ENCODE measurements at regions of chr7 and their contacts with region 1.

Region 1: GRCh38 chr7:149422129-149422913 is 38.5 kb downstream of the ZNF777 start:
- DNase-seq: peak; percentile 90 to 98 (median 98)
- ATAC-seq: peak; percentile 98
- H3K4me3 ChIP-seq: peak overlapping the region; percentile 50
- H3K27ac ChIP-seq: peak overlapping the region; percentile 47; the same call in 1 of the 3 replicates
- H3K4me1 ChIP-seq: peaks cover 3 to 26% of the 10 kb centered on the region in 2 experiments; a peak in 3 of 5 replicates
- H3K27me3 ChIP-seq: no peaks in the 10 kb centered on the region
- CTCF ChIP-seq: peak; percentile 65 to 99 (median 98)
- EP300 ChIP-seq: no peak; the same call in none of the 2 replicates
- POLR2A ChIP-seq: peak; percentile 85
- RAD21 ChIP-seq: peak; percentile 57 to 97; a peak in 3 of 4 replicates

Region 2: GRCh38 chr7:149097088-149097487 is 325.2 kb before region 1 on chr7:
- CTCF ChIA-PET with region 1: no interaction called
- POLR2A ChIA-PET with region 1: no interaction called
- in situ Hi-C with region 1: no loop called
- intact Hi-C with region 1: no loop called
- DNase-seq: no peak
- ATAC-seq: peak; percentile 9; the same call in 1 of the 3 replicates
- H3K4me3 ChIP-seq: no peak overlapping the region
- H3K27ac ChIP-seq: no peak overlapping the region
- H3K4me1 ChIP-seq: peaks cover 4 to 7% of the 10 kb centered on the region in 2 experiments; a peak in 4 of 5 replicates
- H3K27me3 ChIP-seq: peaks cover 11% of the 10 kb centered on the region in 2 experiments; a peak in 3 of 5 replicates
- CTCF ChIP-seq: no peak
- EP300 ChIP-seq: no peak
- POLR2A ChIP-seq: no peak
- RAD21 ChIP-seq: no peak

Region 3: GRCh38 chr7:149195180-149196150 is 226.9 kb before region 1 on chr7 and contains the start of gene ZNF282:
- CTCF ChIA-PET with region 1: no interaction called
- POLR2A ChIA-PET with region 1: no interaction called
- in situ Hi-C with region 1: no loop called
- intact Hi-C with region 1: loop called (anchors 5 kb)
- DNase-seq: peak; percentile 95 to 98 (median 98)
- ATAC-seq: peak; percentile 97
- H3K4me3 ChIP-seq: peak within 1 kb of the TSS; percentile 99
- H3K27ac ChIP-seq: peak within 1 kb of the TSS; percentile 88
- H3K4me1 ChIP-seq: peaks cover 14 to 31% of the 10 kb centered on the region in 2 experiments; a peak in 4 of 5 replicates
- H3K27me3 ChIP-seq: no peaks in the 10 kb centered on the region
- CTCF ChIP-seq: peak; percentile 89 to 95 (median 93)
- EP300 ChIP-seq: peak; percentile 17; the same call in 1 of the 2 replicates
- POLR2A ChIP-seq: peak; percentile 92
- RAD21 ChIP-seq: peak; percentile 69 to 71
- polyA plus RNA-seq, gene ZNF282: 0.76 to 1.3 TPM

Region 4: DNA sequence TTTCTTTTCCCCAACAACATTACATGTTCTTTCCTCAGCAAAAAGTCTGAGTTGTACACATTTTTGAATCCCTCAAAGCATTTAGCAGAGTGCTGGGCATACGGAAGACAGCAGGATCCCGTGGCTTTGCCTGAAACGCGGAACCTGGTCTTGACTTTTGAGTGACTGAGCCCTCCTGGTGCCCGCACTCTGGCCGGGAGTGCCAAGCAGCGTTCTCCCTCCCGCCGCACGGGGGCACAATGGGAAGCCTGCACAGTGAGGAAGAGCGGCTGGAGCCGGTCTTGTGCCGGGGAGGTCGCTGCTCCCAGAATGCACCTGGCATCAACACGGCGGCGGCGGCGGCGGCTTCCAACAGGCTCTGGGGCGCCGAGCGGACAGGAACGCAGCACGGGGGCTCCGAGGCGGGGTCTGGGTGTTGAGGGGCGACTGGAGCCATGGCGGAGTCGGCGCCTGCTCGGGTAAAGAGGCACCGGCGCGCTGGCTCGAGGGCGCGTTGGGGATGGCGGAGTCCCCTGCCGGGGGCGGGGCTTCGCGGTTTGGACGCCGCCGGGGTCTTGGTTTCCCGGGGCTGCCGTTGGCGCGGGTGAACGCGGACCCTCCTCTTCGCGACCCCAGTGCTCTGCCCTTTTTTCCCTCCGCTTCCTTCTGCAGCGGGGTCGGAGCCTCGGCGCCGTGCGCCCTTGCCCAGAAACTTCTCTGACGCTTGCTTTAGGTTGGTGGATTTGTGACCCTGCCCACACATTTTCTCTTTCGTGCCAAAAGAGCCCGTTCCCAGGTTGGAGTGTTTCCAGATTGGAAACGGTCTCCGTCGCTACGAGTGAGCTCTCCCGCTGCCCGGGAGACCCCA is 182.8 kb before region 1 on chr7 and contains the start of gene ZNF212:
- CTCF ChIA-PET with region 1: interaction called, 4 read pairs
- POLR2A ChIA-PET with region 1: no interaction called
- in situ Hi-C with region 1: no loop called
- intact Hi-C with region 1: loop called (anchors 1 kb)
- DNase-seq: peak; percentile 97 to 99 (median 99)
- ATAC-seq: peak; percentile 100
- H3K4me3 ChIP-seq: peak within 1 kb of the TSS; percentile 74
- H3K27ac ChIP-seq: peak within 1 kb of the TSS; percentile 70
- H3K4me1 ChIP-seq: peaks cover 7 to 12% of the 10 kb centered on the region in 2 experiments
- H3K27me3 ChIP-seq: no peaks in the 10 kb centered on the region
- CTCF ChIP-seq: peak; percentile 95 to 97 (median 97)
- EP300 ChIP-seq: peak; percentile 36; the same call in 1 of the 2 replicates
- POLR2A ChIP-seq: peak; percentile 89
- RAD21 ChIP-seq: peak; percentile 45 to 50; a peak in 2 of 4 replicates
- polyA plus RNA-seq, gene ZNF212: 1.8 to 1.9 TPM

Region 5: DNA sequence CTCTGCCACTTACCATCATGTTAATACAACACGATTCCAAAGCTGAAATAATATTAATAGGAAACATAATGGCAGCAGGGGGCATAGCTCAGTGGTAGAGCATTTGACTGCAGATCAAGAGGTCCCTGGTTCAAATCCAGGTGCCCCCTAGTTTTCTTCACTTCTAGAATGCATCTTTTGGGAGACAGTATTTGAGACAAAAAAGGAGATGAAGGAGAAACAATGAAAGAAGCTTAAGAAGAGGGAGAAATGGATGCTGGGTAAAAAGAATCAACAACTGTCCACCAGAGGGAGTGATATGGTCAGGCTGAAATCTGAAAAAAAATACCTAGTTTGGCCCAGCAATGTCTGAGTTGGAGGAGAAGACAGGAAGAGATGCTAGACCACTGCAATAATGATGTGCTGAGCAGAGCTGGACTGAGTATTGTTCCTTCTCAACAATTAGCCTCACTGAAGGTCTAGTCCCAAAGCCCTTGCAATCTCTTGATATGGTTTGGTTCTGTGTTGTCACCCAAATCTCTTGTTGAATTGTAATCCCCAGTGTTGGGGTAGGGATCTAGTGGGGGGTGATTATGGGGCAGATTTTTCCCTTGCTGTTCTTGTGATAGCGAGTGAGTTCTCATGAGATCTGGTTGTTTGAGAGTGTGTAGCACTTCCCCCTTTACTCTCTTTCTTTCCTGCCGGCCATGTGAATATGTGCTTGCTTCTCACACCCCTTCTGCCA is 112.0 kb before region 1 on chr7:
- CTCF ChIA-PET with region 1: interaction called, 9 read pairs
- POLR2A ChIA-PET with region 1: no interaction called
- in situ Hi-C with region 1: no loop called
- intact Hi-C with region 1: loop called (anchors 1 kb)
- DNase-seq: peak; percentile 71 to 75 (median 73)
- ATAC-seq: peak; percentile 92
- H3K4me3 ChIP-seq: no peak overlapping the region
- H3K27ac ChIP-seq: no peak overlapping the region
- H3K4me1 ChIP-seq: peaks cover 0 to 3% of the 10 kb centered on the region in 2 experiments; a peak in 1 of 5 replicates
- H3K27me3 ChIP-seq: peaks cover 0 to 7% of the 10 kb centered on the region in 2 experiments; a peak in 1 of 5 replicates
- CTCF ChIP-seq: peak; percentile 84 to 94 (median 88); a peak in 5 of 6 replicates
- EP300 ChIP-seq: peak; percentile 12; the same call in 1 of the 2 replicates
- POLR2A ChIP-seq: no peak
- RAD21 ChIP-seq: peak; percentile 71 to 88

Region 6: GRCh38 chr7:149460493-149461277 is 38.4 kb after region 1 on chr7 and contains the start of gene ZNF777:
- CTCF ChIA-PET with region 1: interaction called, 5 read pairs
- POLR2A ChIA-PET with region 1: no interaction called
- in situ Hi-C with region 1: no loop called
- intact Hi-C with region 1: loop called (anchors 2 kb)
- DNase-seq: peak in 3 of 4 experiments; percentile 88 to 93 (median 92)
- ATAC-seq: peak; percentile 98
- H3K4me3 ChIP-seq: peak within 1 kb of the TSS; percentile 64
- H3K27ac ChIP-seq: peak within 1 kb of the TSS; percentile 66
- H3K4me1 ChIP-seq: peaks cover 17 to 20% of the 10 kb centered on the region in 2 experiments
- H3K27me3 ChIP-seq: peaks cover 4 to 7% of the 10 kb centered on the region in 2 experiments; a peak in 3 of 5 replicates
- CTCF ChIP-seq: peak; percentile 67 to 88 (median 81)
- EP300 ChIP-seq: 0 out of 2 replicates have a peak, but pooled peaks have one; percentile 31
- POLR2A ChIP-seq: peak; percentile 76
- RAD21 ChIP-seq: peak; percentile 31 to 40
- polyA plus RNA-seq, gene ZNF777: 0.11 to 0.13 TPM

Region 7: GRCh38 chr7:149505551-149505950 is 83.2 kb after region 1 on chr7:
- CTCF ChIA-PET with region 1: no interaction called
- POLR2A ChIA-PET with region 1: no interaction called
- in situ Hi-C with region 1: no loop called
- intact Hi-C with region 1: no loop called
- DNase-seq: no peak
- ATAC-seq: no peak
- H3K4me3 ChIP-seq: no peak overlapping the region
- H3K27ac ChIP-seq: no peak overlapping the region
- H3K4me1 ChIP-seq: no peaks in the 10 kb centered on the region
- H3K27me3 ChIP-seq: peaks cover 5 to 9% of the 10 kb centered on the region in 2 experiments; a peak in 3 of 5 replicates
- CTCF ChIP-seq: no peak
- EP300 ChIP-seq: no peak
- POLR2A ChIP-seq: no peak
- RAD21 ChIP-seq: no peak

Region 8: GRCh38 chr7:149624419-149625339 is 202.4 kb after region 1 on chr7:
- CTCF ChIA-PET with region 1: interaction called, 3 read pairs
- POLR2A ChIA-PET with region 1: no interaction called
- in situ Hi-C with region 1: no loop called
- intact Hi-C with region 1: loop called (anchors 10 kb)
- DNase-seq: peak; percentile 93 to 99 (median 94)
- ATAC-seq: peak; percentile 97
- H3K4me3 ChIP-seq: peak overlapping the region; percentile 84
- H3K27ac ChIP-seq: peak overlapping the region; percentile 83
- H3K4me1 ChIP-seq: peaks cover 20 to 22% of the 10 kb centered on the region in 2 experiments
- H3K27me3 ChIP-seq: no peaks in the 10 kb centered on the region
- CTCF ChIP-seq: peak; percentile 87 to 93 (median 88)
- EP300 ChIP-seq: peak; percentile 44; the same call in 1 of the 2 replicates
- POLR2A ChIP-seq: peak; percentile 90
- RAD21 ChIP-seq: peak in 1 of 2 experiments; percentile 35; a peak in 1 of 4 replicates

Measured in K562 (cell line).